Caco-2 (cell line): ENCODE measurements at regions of chr6 and their contacts with region 1.

Region 1: GRCh38 chr6:27040244-27040981 is 207.1 kb upstream of the PRSS16 start:
- DNase-seq: peak in 1 of 2 experiments; percentile 43
- H3K4me3 ChIP-seq: no peak overlapping the region
- H3K4me3 Mint-ChIP-seq: peak overlapping the region; percentile 39
- H3K27ac Mint-ChIP-seq: peak overlapping the region; percentile 16
- H3K4me1 ChIP-seq: peaks cover 10% of the 10 kb centered on the region; the same call in 1 of the 2 replicates
- H3K4me1 Mint-ChIP-seq: peaks cover 7% of the 10 kb centered on the region
- H3K27me3 ChIP-seq: no peaks in the 10 kb centered on the region
- H3K27me3 Mint-ChIP-seq: no peaks in the 10 kb centered on the region
- CTCF ChIP-seq: peak in 1 of 2 experiments; percentile 16

Region 2: DNA sequence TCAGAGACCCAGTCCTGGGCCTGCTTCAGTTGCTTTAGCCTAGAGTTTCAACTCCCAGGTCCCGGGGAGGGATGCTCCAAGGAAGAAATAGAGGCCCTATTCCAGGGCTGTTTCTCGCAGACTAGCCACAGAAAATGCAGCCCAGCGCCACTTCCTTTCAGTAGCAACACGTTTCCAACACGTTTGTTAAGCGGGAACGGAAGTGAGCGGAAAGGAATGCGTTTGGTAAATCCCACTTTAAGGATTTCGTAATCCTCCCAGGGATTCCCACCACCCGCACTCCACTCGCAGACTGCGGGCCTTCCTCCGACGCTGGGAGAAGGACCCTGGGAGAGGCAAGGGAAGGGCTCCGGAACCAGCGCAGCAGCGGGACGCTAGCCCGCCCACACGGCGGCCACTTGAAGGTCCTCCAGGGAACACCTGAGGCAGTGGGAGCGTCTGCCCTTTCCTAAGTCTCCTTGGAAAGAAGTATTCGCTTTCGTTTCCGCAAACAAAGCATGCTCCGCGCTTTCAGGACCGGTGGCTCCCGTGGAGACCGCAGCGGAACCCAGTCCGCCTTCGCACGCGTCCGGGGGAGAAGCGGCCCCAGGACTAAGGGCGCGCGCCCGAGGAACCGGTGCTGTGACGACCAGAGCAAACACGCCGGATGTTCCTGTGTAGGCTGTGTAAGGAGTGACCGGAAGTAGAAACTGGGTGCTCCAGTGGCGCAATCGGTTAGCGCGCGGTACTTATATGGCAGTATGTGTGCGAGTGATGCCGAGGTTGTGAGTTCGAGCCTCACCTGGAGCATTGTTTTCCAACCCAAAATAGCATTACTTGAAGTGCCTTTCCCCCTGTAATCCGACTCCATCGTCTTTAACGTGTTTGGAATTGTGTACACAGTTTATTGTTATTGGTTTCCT is 20.5 kb before region 1 on chr6:
- CTCF ChIA-PET with region 1: interaction called, 4 read pairs
- POLR2A ChIA-PET with region 1: no interaction called
- intact Hi-C with region 1: loop called (anchors 2 kb)
- DNase-seq: peak; percentile 89 to 94
- H3K4me3 ChIP-seq: peak overlapping the region; percentile 53
- H3K4me3 Mint-ChIP-seq: peak overlapping the region; percentile 87
- H3K27ac Mint-ChIP-seq: peak overlapping the region; percentile 99
- H3K4me1 ChIP-seq: peaks cover 10% of the 10 kb centered on the region
- H3K4me1 Mint-ChIP-seq: peaks cover 7% of the 10 kb centered on the region
- H3K27me3 ChIP-seq: no peaks in the 10 kb centered on the region
- H3K27me3 Mint-ChIP-seq: no peaks in the 10 kb centered on the region
- CTCF ChIP-seq: no peak

Region 3: GRCh38 chr6:27091661-27092646 is 51.5 kb after region 1 on chr6:
- CTCF ChIA-PET with region 1: no interaction called
- POLR2A ChIA-PET with region 1: no interaction called
- intact Hi-C with region 1: no loop called
- DNase-seq: peak; percentile 53 to 65
- H3K4me3 ChIP-seq: peak overlapping the region; percentile 55
- H3K4me3 Mint-ChIP-seq: peak overlapping the region; percentile 89
- H3K27ac Mint-ChIP-seq: peak overlapping the region; percentile 83
- H3K4me1 ChIP-seq: no peaks in the 10 kb centered on the region
- H3K4me1 Mint-ChIP-seq: no peaks in the 10 kb centered on the region
- H3K27me3 ChIP-seq: no peaks in the 10 kb centered on the region
- H3K27me3 Mint-ChIP-seq: peaks cover 2% of the 10 kb centered on the region
- CTCF ChIP-seq: no peak